HEK293 (cell line): ENCODE measurements at regions of chr11 and their contacts with region 1.

Region 1: DNA sequence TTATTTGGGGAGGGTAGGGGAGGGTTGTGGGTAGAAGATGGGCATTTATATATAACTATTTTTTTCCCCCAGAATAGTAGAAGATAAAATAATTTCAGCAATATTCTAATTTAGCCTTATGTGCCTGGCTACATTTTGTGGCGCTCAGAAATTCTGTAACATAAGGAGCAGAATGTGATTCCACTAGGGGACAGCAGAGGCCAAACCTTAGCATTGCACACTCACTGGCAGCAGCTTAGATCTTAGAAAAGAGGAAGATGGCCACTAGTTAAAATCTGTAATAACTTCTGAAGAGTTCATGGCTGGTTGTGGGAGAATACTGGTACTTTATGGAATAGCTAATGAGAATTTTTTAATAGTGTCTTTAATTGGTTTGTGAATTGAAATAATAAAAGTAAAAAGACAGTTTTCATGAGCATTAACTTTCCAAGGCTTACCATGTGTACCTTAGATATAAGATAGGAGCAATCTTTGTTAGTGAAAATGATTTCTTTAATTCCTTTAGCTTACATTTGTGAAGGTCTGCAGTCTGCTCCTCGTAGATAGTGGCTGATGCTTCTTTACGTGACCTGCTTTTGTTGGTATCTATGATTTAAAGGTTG is 33.1 kb downstream of the DDX10 start:
- H3K4me3 ChIP-seq: no peak overlapping the region
- H3K27ac ChIP-seq: no peak overlapping the region
- H3K4me1 ChIP-seq: no peaks in the 10 kb centered on the region
- CTCF ChIP-seq: peak; percentile 57

Region 2: GRCh38 chr11:108835624-108836023 is 137.7 kb after region 1 on chr11:
- CTCF ChIA-PET with region 1: no interaction called
- POLR2A ChIA-PET with region 1: no interaction called
- H3K4me3 ChIP-seq: no peak overlapping the region
- H3K27ac ChIP-seq: no peak overlapping the region
- H3K4me1 ChIP-seq: no peaks in the 10 kb centered on the region
- CTCF ChIP-seq: no peak

Region 3: GRCh38 chr11:108871152-108871551 is 173.2 kb after region 1 on chr11:
- CTCF ChIA-PET with region 1: interaction called, 20 read pairs
- POLR2A ChIA-PET with region 1: interaction called, 3 read pairs
- H3K4me3 ChIP-seq: no peak overlapping the region
- H3K27ac ChIP-seq: no peak overlapping the region
- H3K4me1 ChIP-seq: no peaks in the 10 kb centered on the region; the same call in 1 of the 2 replicates
- CTCF ChIP-seq: no peak; the same call in 1 of the 2 replicates